Dendritic cell treated with granulocyte-macrophage colony-stimulating factor and Interleukin-4, amounts not matched to agents 40 ng/mL and 50 ng/mL, for 4 days (primary cell): ENCODE measurements at regions of chr9 and their contacts with region 1.

Region 1: DNA sequence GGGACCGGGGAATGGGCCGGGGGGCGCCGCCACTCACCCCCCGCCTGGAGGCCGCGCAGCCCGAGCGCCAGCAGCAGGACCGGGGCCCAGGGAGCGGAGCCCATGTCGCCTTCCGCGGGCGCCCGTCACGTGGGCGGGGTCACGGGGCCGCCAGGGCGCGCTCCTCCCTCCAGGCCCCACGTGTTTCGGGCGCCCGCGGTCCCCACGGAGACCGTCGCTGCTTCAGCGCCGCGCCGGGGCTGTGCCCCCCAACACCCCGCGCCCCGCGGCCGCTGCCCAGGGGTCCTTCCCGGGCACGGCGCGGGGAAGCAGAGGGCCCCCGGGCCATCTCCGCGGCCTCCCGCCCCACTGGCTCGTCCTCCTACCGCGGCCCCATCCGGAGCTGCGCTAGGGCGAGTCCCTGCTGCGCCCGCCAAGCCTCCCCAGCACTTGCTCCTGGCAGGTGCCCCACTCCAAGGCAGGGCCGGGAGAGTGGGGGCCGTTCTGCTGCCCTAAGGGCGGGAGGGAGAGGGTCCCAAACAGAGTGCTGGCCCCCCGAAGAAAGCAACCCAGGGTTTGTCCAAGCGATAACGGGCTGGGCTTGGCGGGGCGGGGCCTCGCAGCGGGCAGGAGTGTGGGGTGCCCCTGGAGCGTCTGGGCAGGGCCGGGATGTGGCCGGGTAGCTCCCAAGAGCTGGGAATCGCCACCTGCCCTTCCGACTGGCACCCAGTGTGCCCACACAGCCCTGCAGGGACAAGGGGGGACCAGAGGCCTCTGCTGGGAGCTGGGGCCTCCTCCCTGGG is at the start of gene DPP7:
- H3K4me3 Mint-ChIP-seq: peak within 1 kb of the TSS; percentile 69
- H3K27ac Mint-ChIP-seq: peak within 1 kb of the TSS; percentile 46
- H3K4me1 Mint-ChIP-seq: peaks cover 19% of the 10 kb centered on the region
- H3K27me3 Mint-ChIP-seq: peaks cover 15% of the 10 kb centered on the region

Region 2: DNA sequence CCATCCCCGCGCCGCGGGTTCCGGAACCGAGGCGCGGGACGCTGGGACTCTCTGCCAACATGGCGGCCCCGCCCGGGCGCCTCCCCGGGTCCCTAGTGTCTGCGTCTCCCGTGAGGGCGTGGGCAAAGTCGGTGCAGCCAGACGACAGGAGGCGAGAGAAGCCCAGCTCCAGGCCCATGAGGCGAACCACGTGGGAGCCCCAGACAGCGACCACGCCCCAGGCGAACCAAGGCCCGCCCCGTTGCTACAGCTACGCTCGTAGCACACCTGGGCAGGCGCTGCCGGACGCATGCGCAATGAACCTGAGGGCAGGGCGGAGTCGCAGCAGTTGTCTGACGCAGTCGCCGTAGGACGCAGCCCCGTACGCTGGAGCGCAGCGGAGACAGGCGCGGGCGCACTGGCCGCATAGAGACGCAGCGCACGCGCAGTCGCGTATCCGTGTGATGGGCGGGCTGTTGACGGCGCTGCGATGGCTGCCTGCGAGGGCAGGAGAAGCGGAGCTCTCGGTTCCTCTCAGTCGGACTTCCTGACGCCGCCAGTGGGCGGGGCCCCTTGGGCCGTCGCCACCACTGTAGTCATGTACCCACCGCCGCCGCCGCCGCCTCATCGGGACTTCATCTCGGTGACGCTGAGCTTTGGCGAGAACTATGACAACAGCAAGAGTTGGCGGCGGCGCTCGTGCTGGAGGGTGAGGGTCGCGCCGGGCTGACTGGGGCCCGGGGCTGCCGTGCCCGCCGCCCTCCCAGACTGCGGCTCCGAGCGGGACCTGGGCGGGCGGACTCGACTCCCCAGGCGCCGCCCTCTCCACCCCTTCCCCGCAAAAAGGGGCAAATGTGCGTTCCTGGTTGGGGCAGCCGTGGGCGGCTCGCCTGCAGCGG is 28.0 kb before region 1 on chr9 and contains the start of gene MAN1B1:
- intact Hi-C with region 1: loop called (anchors 1 kb)
- H3K4me3 Mint-ChIP-seq: peak within 1 kb of the TSS; percentile 84
- H3K27ac Mint-ChIP-seq: peak within 1 kb of the TSS; percentile 97
- H3K4me1 Mint-ChIP-seq: peaks cover 67% of the 10 kb centered on the region
- H3K27me3 Mint-ChIP-seq: no peaks in the 10 kb centered on the region

Region 3: GRCh38 chr9:137150617-137151457 is 36.0 kb after region 1 on chr9:
- intact Hi-C with region 1: no loop called
- H3K4me3 Mint-ChIP-seq: peak overlapping the region; percentile 40
- H3K27ac Mint-ChIP-seq: peak overlapping the region; percentile 75
- H3K4me1 Mint-ChIP-seq: peaks cover 12% of the 10 kb centered on the region
- H3K27me3 Mint-ChIP-seq: peaks cover 43% of the 10 kb centered on the region

Region 4: GRCh38 chr9:137243626-137244485 is 129.1 kb after region 1 on chr9:
- intact Hi-C with region 1: no loop called
- H3K4me3 Mint-ChIP-seq: peak overlapping the region; percentile 24
- H3K27ac Mint-ChIP-seq: peak overlapping the region; percentile 9
- H3K4me1 Mint-ChIP-seq: peaks cover 31% of the 10 kb centered on the region
- H3K27me3 Mint-ChIP-seq: no peaks in the 10 kb centered on the region